ENCODE measurements at regions of chr10 and their contacts with region 1.

Region 1: GRCh38 chr10:110871298-110872084 is at the start of gene PDCD4:
- DNase-seq: peak; percentile 100
- total RNA-seq, gene PDCD4: 42.0 TPM

Region 2: GRCh38 chr10:110643653-110644597 is 227.6 kb before region 1 on chr10 and contains the start of gene RBM20:
- intact Hi-C with region 1: no loop called
- DNase-seq: peak; percentile 88
- total RNA-seq, gene RBM20: 105 TPM

Region 3: GRCh38 chr10:110746254-110746826 is 125.2 kb before region 1 on chr10:
- intact Hi-C with region 1: loop called (anchors 1 kb)
- DNase-seq: no peak

Region 4: GRCh38 chr10:110803830-110804338 is 67.6 kb before region 1 on chr10:
- intact Hi-C with region 1: loop called (anchors 5 kb)
- DNase-seq: peak; percentile 72

Region 5: DNA sequence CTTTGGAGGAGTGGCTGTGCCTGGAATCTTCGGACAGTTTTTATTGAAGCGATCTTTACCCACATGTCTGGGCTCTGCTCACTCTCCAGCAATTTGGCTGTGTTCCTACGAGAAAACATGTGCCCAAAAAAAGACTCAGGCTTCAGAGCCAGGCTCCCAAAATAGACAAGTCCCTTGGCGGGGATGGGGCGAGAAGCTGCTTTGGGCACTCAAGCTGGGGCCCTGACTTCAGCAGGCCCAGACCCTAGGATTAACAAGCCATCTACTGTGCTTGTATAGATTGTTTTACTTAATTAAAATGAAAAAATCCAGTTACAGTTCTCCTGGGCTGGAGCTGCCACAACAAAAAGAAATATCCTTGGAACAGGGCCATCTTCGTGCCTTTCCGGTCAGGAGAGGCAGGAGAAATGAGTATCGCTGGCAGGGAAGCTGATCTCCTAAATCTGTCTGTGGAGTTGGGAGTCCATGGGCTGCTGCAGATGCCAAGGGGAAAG is 51.1 kb before region 1 on chr10:
- intact Hi-C with region 1: loop called (anchors 5 kb)
- DNase-seq: peak; percentile 82

Region 6: GRCh38 chr10:110918643-110919363 is 47.3 kb after region 1 on chr10 and contains the start of gene BBIP1:
- intact Hi-C with region 1: loop called (anchors 5 kb)
- DNase-seq: no peak
- total RNA-seq, gene BBIP1: 31.1 TPM

Region 7: DNA sequence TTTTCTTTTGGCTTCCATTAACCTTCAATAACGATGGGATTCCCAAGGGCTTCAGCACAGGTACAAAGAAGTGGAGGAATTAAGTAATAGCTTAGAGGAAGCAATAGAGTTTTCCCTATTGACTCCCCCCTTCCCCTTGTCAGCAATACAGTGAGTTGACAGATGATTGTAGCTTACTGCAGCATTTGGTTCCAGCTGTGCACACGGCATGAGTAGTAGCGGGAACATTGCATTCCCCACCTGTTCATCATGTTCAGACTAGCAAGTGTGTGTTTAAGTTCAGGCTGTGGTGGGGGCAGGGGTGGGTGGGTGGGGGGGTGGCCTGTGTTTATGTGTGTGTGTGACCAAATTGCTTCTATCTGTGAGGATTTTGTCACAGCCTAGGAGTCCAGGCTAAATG is 200.7 kb after region 1 on chr10:
- intact Hi-C with region 1: no loop called
- DNase-seq: no peak

Measured in cardiac septum (tissue), 1 donor.